CD4-positive, alpha-beta T cell (primary cell): ENCODE measurements at regions of chr5 and their contacts with region 1.

Region 1: DNA sequence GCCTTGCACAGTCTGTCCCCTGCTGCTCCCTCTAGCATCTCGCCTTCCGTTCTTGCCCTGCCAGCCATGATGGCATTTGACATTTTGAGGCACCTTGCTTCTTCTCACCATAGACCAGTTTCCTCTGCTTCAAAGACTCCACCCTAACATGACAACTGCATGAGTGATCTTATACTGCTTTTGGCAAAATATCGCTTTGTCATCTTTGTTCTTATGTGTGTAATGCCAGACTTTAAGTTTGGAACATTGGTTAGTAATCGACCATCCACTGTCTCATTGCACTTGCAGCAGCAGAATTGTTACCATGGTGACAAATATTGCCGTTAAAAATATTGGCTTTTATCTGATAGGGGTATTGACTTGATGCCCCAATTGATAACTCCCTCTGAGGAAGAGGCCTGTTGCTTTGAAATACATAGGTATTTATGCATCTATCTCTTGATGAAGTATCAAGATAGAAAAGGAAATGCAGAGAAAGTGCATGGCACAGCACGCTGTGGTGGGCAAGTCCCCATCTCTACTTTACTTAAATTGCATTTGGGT is 6.8 kb downstream of the GARIN3 start:
- DNase-seq: peak in 11 of 14 experiments; percentile 23 to 90 (median 44)
- ATAC-seq: peak; percentile 80
- H3K4me3 ChIP-seq: no peak overlapping the region
- H3K4me3 Mint-ChIP-seq: peak overlapping the region; percentile 54
- H3K27ac ChIP-seq: peak overlapping the region; percentile 79 to 93
- H3K27ac Mint-ChIP-seq: peak overlapping the region; percentile 65
- H3K4me1 ChIP-seq: peaks cover 39% of the 10 kb centered on the region
- H3K4me1 Mint-ChIP-seq: peaks cover 69% of the 10 kb centered on the region
- H3K27me3 ChIP-seq: no peaks in the 10 kb centered on the region
- H3K27me3 Mint-ChIP-seq: no peaks in the 10 kb centered on the region
- CTCF ChIP-seq: no peak

Region 2: DNA sequence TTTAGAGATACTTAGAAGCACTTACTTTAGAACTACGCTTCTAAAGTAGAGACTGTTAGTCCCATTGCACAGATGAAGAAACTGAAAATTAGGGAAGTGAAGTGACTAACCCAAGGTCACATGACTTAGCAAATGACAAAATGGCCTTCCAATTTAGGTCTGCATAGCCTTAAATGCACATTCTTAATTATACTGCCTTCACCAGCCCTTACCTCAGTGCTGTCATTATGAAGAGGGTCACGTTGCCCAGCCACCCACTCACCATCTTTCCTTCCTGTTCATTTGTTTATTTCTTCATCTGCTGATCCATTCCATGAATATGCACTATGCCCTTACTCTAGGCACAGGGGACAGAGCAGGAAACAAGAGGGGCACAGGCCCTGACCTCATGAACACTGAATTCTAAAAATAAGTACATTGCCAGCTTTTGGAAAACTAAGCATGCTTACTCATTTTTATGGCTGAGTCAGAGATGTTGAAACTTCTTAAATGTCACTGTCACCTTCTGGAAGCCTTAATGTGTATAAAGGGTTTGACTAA is 59.1 kb before region 1 on chr5:
- CTCF ChIA-PET with region 1: no interaction called
- POLR2A ChIA-PET with region 1: no interaction called
- intact Hi-C with region 1: no loop called
- DNase-seq: peak in 2 of 14 experiments; percentile 39 to 49
- ATAC-seq: no peak
- H3K4me3 ChIP-seq: no peak overlapping the region
- H3K4me3 Mint-ChIP-seq: no peak overlapping the region
- H3K27ac ChIP-seq: no peak overlapping the region
- H3K27ac Mint-ChIP-seq: no peak overlapping the region
- H3K4me1 ChIP-seq: no peaks in the 10 kb centered on the region
- H3K4me1 Mint-ChIP-seq: no peaks in the 10 kb centered on the region
- H3K27me3 ChIP-seq: no peaks in the 10 kb centered on the region
- H3K27me3 Mint-ChIP-seq: no peaks in the 10 kb centered on the region
- CTCF ChIP-seq: no peak

Region 3: GRCh38 chr5:157198277-157198986 is 39.2 kb after region 1 on chr5:
- CTCF ChIA-PET with region 1: interaction called, 4 read pairs
- POLR2A ChIA-PET with region 1: interaction called, 8 read pairs
- intact Hi-C with region 1: loop called in 1 of 2 experiments (anchors 5 kb)
- DNase-seq: peak in 13 of 14 experiments; percentile 31 to 80 (median 59)
- ATAC-seq: peak; percentile 39
- H3K4me3 ChIP-seq: no peak overlapping the region
- H3K4me3 Mint-ChIP-seq: peak overlapping the region; percentile 49
- H3K27ac ChIP-seq: peak overlapping the region; percentile 63 to 79
- H3K27ac Mint-ChIP-seq: peak overlapping the region; percentile 96
- H3K4me1 ChIP-seq: peaks cover 80% of the 10 kb centered on the region
- H3K4me1 Mint-ChIP-seq: peaks cover 99% of the 10 kb centered on the region
- H3K27me3 ChIP-seq: no peaks in the 10 kb centered on the region
- H3K27me3 Mint-ChIP-seq: no peaks in the 10 kb centered on the region
- CTCF ChIP-seq: no peak